B cell (primary cell): ENCODE measurements at regions of chr18 and their contacts with region 1.

Region 1: DNA sequence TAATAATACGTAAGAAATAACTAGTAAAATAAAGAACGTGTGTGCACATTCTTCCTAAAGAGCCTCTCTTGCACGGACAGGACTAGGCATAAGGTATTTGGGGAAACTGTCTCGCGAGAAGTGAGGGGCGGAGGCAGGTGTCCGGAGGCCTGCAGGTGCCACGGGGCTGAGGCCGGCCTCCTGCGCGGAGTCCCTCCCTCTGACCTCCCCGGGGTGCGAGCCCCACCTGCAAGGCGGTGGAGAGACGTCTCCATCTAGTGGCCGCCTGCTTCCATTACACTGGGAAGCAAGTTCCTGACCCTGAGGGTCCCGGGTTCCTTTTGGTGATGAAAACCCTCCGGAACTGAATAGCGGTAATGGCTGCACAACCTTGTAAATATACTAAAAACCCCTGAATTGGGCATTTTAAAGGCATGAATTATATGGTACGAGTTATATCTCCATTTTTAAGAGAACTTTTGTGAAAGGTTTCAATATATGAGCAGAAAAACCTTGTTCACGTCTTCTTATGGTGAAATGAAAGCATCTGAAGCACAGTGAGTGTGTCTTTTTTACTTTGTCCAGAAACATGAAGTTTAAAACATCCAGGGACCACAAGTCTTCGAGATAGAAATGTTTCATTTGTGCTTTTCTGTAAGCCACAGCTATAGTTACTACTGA is 35.5 kb upstream of the CTDP1 start:
- DNase-seq: peak; percentile 82
- ATAC-seq: peak; percentile 94
- H3K4me3 ChIP-seq: no peak overlapping the region
- H3K4me3 Mint-ChIP-seq: no peak overlapping the region
- H3K27ac ChIP-seq: no peak overlapping the region
- H3K27ac Mint-ChIP-seq: peak overlapping the region; percentile 15
- H3K4me1 ChIP-seq: peaks cover 15 to 22% of the 10 kb centered on the region in 2 donors
- H3K4me1 Mint-ChIP-seq: peaks cover 20% of the 10 kb centered on the region
- H3K27me3 ChIP-seq: no peaks in the 10 kb centered on the region
- H3K27me3 Mint-ChIP-seq: no peaks in the 10 kb centered on the region
- CTCF ChIP-seq: peak; percentile 99

Region 2: GRCh38 chr18:78875268-78875997 is 768.7 kb before region 1 on chr18:
- CTCF ChIA-PET with region 1: no interaction called
- POLR2A ChIA-PET with region 1: no interaction called
- intact Hi-C with region 1: loop called (anchors 5 kb)
- DNase-seq: no peak
- ATAC-seq: no peak
- H3K4me3 ChIP-seq: no peak overlapping the region
- H3K4me3 Mint-ChIP-seq: no peak overlapping the region
- H3K27ac ChIP-seq: no peak overlapping the region
- H3K27ac Mint-ChIP-seq: no peak overlapping the region
- H3K4me1 ChIP-seq: no peaks in the 10 kb centered on the region
- H3K4me1 Mint-ChIP-seq: no peaks in the 10 kb centered on the region
- H3K27me3 ChIP-seq: no peaks in the 10 kb centered on the region
- H3K27me3 Mint-ChIP-seq: peaks cover 8% of the 10 kb centered on the region
- CTCF ChIP-seq: peak; percentile 24

Region 3: GRCh38 chr18:79528846-79529245 is 115.3 kb before region 1 on chr18:
- CTCF ChIA-PET with region 1: interaction called, 10 read pairs
- POLR2A ChIA-PET with region 1: no interaction called
- intact Hi-C with region 1: loop called (anchors 1 kb)
- DNase-seq: peak; percentile 83
- ATAC-seq: peak; percentile 34
- H3K4me3 ChIP-seq: no peak overlapping the region
- H3K4me3 Mint-ChIP-seq: no peak overlapping the region
- H3K27ac ChIP-seq: no peak overlapping the region
- H3K27ac Mint-ChIP-seq: no peak overlapping the region
- H3K4me1 ChIP-seq: peaks cover 15 to 24% of the 10 kb centered on the region in 2 donors
- H3K4me1 Mint-ChIP-seq: peaks cover 26% of the 10 kb centered on the region
- H3K27me3 ChIP-seq: no peaks in the 10 kb centered on the region
- H3K27me3 Mint-ChIP-seq: no peaks in the 10 kb centered on the region
- CTCF ChIP-seq: peak; percentile 94

Region 4: GRCh38 chr18:79672490-79673276 is 28.5 kb after region 1 on chr18:
- CTCF ChIA-PET with region 1: no interaction called
- POLR2A ChIA-PET with region 1: no interaction called
- intact Hi-C with region 1: no loop called
- DNase-seq: no peak
- ATAC-seq: no peak
- H3K4me3 ChIP-seq: no peak overlapping the region
- H3K4me3 Mint-ChIP-seq: no peak overlapping the region
- H3K27ac ChIP-seq: no peak overlapping the region
- H3K27ac Mint-ChIP-seq: no peak overlapping the region
- H3K4me1 ChIP-seq: peaks cover 2 to 10% of the 10 kb centered on the region in 2 donors
- H3K4me1 Mint-ChIP-seq: peaks cover 4% of the 10 kb centered on the region
- H3K27me3 ChIP-seq: no peaks in the 10 kb centered on the region
- H3K27me3 Mint-ChIP-seq: no peaks in the 10 kb centered on the region
- CTCF ChIP-seq: no peak